Activated CD8-positive, alpha-beta T cell treated with anti-CD3 and anti-CD28 coated beads for 36 hours (primary cell): ENCODE measurements at regions of chr19 and their contacts with region 1.

Region 1: DNA sequence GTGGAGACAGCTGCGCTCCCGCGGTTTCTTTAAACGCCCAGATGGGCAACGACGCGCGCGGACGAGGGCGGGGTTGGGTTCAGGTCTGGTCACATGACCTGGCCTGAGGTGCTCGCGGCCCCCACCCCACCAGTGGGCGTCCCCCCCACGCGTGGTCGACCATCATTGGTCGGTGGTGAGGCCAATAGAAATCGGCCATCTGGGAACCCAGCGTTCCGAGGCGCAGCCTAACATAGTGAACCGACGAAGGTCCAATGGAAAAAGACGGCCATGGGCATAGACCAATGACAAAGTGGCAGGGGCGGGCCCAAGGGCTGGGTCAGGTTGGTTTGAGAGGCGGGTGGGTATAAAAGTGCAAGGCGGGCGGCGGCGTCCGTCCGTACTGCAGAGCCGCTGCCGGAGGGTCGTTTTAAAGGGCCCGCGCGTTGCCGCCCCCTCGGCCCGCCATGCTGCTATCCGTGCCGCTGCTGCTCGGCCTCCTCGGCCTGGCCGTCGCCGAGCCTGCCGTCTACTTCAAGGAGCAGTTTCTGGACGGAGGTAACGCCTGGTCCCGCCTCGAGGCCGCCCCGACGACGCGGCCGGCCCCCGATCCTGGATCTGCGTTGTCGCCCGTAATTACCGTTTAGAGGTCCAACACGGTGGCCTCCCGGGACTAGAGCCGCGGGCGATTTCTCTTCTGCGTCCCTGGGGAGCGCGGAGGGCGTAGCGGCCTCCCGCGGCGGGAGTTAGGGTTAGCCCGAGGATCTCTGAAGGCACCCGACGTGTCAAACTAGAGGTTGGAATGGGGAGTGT is at the start of gene CALR:
- DNase-seq: peak; percentile 100
- ATAC-seq: peak; percentile 87
- H3K4me3 Mint-ChIP-seq: peak within 1 kb of the TSS; percentile 99
- H3K27ac Mint-ChIP-seq: peak within 1 kb of the TSS; percentile 95
- H3K4me1 Mint-ChIP-seq: peaks cover 49% of the 10 kb centered on the region
- H3K27me3 Mint-ChIP-seq: no peaks in the 10 kb centered on the region
- CTCF ChIP-seq: no peak
- total RNA-seq, gene CALR: 535 to 563 TPM

Region 2: DNA sequence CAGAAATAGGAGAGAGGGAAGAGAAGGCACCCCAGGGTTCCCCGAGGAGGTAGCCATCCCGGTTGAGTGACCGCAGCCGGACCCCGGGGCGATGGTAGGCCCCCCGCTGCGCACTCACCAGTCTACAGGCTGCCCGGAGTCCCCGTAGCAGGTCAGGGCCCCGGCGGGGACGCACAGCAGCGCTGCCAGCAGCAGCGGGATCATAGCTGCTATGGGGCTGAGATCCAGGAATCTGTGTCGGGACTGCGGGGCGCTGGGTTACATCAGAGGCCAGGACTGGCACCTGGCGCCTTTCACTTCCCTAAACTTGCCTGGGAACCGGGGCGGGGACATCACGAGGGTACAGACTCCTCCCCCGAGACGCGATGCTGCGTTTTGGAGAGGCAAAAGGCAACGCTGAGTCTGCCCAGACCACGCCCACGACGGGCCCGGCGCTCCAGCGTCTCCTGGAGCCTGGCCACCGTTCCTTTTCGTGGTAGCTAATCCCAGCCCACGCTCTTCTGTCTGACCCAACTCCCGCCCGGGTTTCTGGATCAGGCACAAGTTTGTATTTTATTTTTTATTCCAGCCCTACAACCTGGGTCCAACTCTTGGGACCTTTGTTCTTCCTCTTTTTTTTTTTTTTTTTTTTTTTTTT is 57.1 kb before region 1 on chr19 and contains the start of gene DNASE2:
- CTCF ChIA-PET with region 1: interaction called, 15 read pairs
- POLR2A ChIA-PET with region 1: interaction called, 7 read pairs
- intact Hi-C with region 1: loop called (anchors 10 kb)
- DNase-seq: peak; percentile 96
- ATAC-seq: peak; percentile 73
- H3K4me3 Mint-ChIP-seq: peak within 1 kb of the TSS; percentile 90
- H3K27ac Mint-ChIP-seq: peak within 1 kb of the TSS; percentile 88
- H3K4me1 Mint-ChIP-seq: peaks cover 16% of the 10 kb centered on the region
- H3K27me3 Mint-ChIP-seq: no peaks in the 10 kb centered on the region
- CTCF ChIP-seq: no peak
- total RNA-seq, gene DNASE2: 22.3 to 26.1 TPM

Region 3: DNA sequence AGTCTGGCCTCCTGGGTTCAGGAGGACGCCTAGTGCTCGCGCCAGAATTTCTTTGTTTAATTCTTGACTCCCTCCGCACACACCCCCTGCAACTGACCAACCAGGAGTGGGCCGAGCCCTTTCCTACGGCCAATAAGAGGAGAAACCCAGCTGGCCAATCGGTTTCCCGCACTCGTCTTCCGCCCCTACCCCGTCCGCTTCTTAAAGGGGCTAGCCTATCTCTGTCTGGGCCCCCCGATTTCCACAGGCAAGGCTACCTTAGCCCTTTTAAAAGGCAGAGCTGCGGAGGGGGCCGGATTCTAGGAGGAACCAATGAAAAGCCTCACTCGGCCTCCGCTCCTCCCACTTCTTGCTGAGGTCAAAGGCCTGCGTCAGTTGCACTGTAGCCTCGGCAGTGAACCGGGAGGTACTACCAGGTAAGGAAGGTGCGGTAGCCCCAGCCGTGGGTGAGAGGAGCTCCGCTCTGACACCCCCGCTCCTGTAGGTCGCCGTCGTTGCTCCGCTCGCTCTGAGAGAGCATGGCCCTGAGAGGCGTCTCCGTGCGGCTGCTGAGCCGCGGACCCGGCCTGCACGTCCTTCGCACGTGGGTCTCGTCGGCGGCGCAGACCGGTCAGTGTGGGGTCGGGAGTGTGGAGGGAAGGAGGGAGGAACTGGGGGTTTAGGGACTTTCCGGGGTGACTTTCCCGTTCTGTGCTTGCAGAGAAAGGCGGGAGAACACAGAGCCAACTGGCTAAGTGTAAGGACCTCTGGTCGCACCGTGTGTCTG is 47.5 kb before region 1 on chr19 and contains the start of gene GCDH:
- CTCF ChIA-PET with region 1: interaction called, 7 read pairs
- POLR2A ChIA-PET with region 1: interaction called, 19 read pairs
- intact Hi-C with region 1: loop called (anchors 10 kb)
- DNase-seq: peak; percentile 99
- ATAC-seq: peak; percentile 95
- H3K4me3 Mint-ChIP-seq: peak within 1 kb of the TSS; percentile 100
- H3K27ac Mint-ChIP-seq: peak within 1 kb of the TSS; percentile 95
- H3K4me1 Mint-ChIP-seq: peaks cover 21% of the 10 kb centered on the region
- H3K27me3 Mint-ChIP-seq: no peaks in the 10 kb centered on the region
- CTCF ChIP-seq: no peak
- total RNA-seq, gene GCDH: 37.5 to 43.8 TPM

Region 4: DNA sequence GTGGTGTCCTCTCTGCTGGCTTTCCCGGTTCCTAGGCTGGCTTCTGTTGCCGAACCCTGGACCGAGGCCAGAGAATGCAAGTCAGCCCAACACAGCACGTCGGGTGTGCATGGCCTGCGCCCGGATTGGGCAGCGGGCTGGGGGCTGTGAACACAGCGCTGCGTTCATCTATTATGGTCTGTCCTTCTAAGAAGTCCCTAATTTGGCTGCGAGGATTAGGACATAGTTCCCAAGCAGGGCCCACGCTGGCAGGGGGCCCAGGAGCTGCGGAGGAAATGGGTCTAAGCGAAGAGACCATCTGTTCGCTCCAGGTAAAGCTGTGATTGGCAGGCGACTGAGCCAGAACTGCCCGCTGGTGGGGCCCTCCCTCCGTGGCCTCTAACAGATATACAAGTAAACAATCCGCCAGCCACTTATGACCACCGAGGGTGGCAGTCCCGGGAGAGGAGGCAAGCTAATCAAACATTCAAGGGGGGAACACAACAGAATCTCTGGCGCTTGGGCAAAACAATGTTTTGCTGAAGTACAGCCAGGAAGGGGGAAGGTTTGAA is 25.3 kb before region 1 on chr19:
- CTCF ChIA-PET with region 1: no interaction called
- POLR2A ChIA-PET with region 1: interaction called, 39 read pairs
- intact Hi-C with region 1: no loop called
- DNase-seq: no peak
- ATAC-seq: no peak
- H3K4me3 Mint-ChIP-seq: no peak overlapping the region
- H3K27ac Mint-ChIP-seq: peak overlapping the region; percentile 40
- H3K4me1 Mint-ChIP-seq: peaks cover 19% of the 10 kb centered on the region
- H3K27me3 Mint-ChIP-seq: no peaks in the 10 kb centered on the region
- CTCF ChIP-seq: no peak

Region 5: DNA sequence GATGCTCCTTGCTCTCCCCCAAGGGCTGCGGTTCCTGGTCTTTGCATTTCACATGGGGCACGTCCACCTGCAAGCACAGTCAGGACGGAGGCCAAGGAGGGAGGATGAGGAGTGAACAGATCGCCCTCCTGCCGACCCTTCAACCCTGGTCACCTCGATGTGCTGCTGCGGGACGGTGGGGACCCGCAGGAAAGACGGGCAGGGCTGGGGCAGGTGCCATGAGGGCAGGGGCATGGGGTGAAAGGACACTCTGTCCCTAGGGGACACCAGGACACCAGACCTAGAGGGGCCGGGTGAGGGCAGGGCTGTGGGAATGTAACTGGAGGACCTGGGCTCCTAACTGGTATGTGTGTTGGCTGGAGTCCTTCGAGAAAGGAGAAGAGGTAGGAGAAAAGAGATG is 20.2 kb before region 1 on chr19:
- CTCF ChIA-PET with region 1: no interaction called
- POLR2A ChIA-PET with region 1: interaction called, 39 read pairs
- intact Hi-C with region 1: no loop called
- DNase-seq: no peak
- ATAC-seq: no peak
- H3K4me3 Mint-ChIP-seq: peak overlapping the region; percentile 62
- H3K27ac Mint-ChIP-seq: peak overlapping the region; percentile 85
- H3K4me1 Mint-ChIP-seq: peaks cover 32% of the 10 kb centered on the region
- H3K27me3 Mint-ChIP-seq: no peaks in the 10 kb centered on the region
- CTCF ChIP-seq: no peak

Region 6: GRCh38 chr19:12956446-12957388 is 18.3 kb after region 1 on chr19 and contains the start of gene GADD45GIP1:
- CTCF ChIA-PET with region 1: no interaction called
- POLR2A ChIA-PET with region 1: interaction called, 17 read pairs
- intact Hi-C with region 1: no loop called
- DNase-seq: peak; percentile 87
- ATAC-seq: peak; percentile 96
- H3K4me3 Mint-ChIP-seq: peak within 1 kb of the TSS; percentile 78
- H3K27ac Mint-ChIP-seq: peak within 1 kb of the TSS; percentile 98
- H3K4me1 Mint-ChIP-seq: peaks cover 36% of the 10 kb centered on the region
- H3K27me3 Mint-ChIP-seq: no peaks in the 10 kb centered on the region
- CTCF ChIP-seq: no peak
- total RNA-seq, gene GADD45GIP1: 32.6 to 36.0 TPM

Region 7: GRCh38 chr19:12983542-12984142 is 45.2 kb after region 1 on chr19:
- CTCF ChIA-PET with region 1: no interaction called
- POLR2A ChIA-PET with region 1: no interaction called
- intact Hi-C with region 1: no loop called
- DNase-seq: peak; percentile 85
- ATAC-seq: peak; percentile 89
- H3K4me3 Mint-ChIP-seq: no peak overlapping the region
- H3K27ac Mint-ChIP-seq: no peak overlapping the region
- H3K4me1 Mint-ChIP-seq: peaks cover 2% of the 10 kb centered on the region
- H3K27me3 Mint-ChIP-seq: peaks cover 4% of the 10 kb centered on the region
- CTCF ChIP-seq: peak; percentile 97

Region 8: GRCh38 chr19:13143135-13143534 is 204.7 kb after region 1 on chr19:
- CTCF ChIA-PET with region 1: no interaction called
- POLR2A ChIA-PET with region 1: no interaction called
- intact Hi-C with region 1: no loop called
- DNase-seq: no peak
- ATAC-seq: no peak
- H3K4me3 Mint-ChIP-seq: no peak overlapping the region
- H3K27ac Mint-ChIP-seq: no peak overlapping the region
- H3K4me1 Mint-ChIP-seq: peaks cover 11% of the 10 kb centered on the region
- H3K27me3 Mint-ChIP-seq: no peaks in the 10 kb centered on the region
- CTCF ChIP-seq: no peak